WTC11 (cell line): ENCODE measurements at regions of chr9 and their contacts with region 1.

Region 1: DNA sequence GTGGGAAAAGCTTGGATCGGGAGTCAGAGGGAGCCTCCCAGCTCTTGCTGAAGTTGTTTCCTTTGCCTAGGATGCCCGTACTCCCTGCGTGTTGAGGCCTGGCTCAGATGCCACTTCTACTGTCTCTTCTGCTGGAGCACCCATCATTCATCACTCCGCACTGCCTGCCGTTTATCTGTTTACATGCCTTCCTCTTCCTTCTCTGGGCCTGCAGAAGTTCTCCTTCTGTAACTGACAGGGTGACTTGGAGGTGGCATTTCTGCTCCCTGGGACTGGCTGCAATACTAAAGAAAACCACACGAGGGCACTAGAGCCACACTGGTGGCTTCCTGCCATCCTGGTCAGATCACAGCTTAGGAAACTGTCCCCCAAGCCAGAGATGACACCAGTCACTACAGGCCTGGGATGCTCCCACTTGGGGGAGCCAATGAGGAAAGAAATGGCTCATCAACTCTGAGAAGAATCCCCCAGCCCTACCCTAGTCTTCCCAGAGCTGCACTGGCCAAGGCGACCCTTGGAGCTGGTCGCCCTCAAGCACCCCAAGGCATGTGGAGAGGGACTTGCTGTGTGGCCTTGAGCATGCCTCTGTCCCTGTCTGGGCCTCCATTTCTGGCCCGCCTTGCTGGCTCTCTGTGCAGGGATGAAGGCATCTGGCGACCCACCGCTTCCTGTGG is 9.7 kb upstream of the SLC25A51 start:
- DNase-seq: peak; percentile 92
- ATAC-seq: peak; percentile 96
- H3K4me3 Mint-ChIP-seq: no peak overlapping the region
- H3K27ac Mint-ChIP-seq: no peak overlapping the region
- H3K4me1 Mint-ChIP-seq: 0 out of 2 replicates have a peak, but pooled peaks cover 3% of the 10 kb centered on the region
- H3K27me3 Mint-ChIP-seq: no peaks in the 10 kb centered on the region
- CTCF ChIP-seq: peak; percentile 97

Region 2: DNA sequence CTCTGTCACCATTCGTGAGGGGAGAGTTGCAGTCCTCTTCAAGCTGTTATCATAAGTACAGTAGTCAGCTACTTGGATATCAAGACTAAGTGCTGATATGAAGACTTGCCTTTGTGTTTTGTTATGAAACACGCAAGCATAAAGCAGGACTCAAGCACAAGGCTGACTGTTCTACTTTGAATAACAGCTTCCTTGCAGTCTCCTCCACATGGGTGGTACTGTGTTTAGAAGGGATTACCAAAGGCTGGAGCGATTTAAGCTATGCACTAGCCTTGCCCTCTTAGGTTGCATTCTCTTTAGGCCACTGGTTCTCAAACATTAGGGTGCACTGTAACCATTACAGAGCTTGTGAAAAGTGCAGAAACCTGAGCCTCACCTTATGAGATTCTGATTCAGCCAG is 51.1 kb before region 1 on chr9:
- CTCF ChIA-PET with region 1: no interaction called
- POLR2A ChIA-PET with region 1: no interaction called
- DNase-seq: no peak
- ATAC-seq: no peak
- H3K4me3 Mint-ChIP-seq: no peak overlapping the region
- H3K27ac Mint-ChIP-seq: no peak overlapping the region
- H3K4me1 Mint-ChIP-seq: no peaks in the 10 kb centered on the region
- H3K27me3 Mint-ChIP-seq: no peaks in the 10 kb centered on the region
- CTCF ChIP-seq: no peak

Region 3: DNA sequence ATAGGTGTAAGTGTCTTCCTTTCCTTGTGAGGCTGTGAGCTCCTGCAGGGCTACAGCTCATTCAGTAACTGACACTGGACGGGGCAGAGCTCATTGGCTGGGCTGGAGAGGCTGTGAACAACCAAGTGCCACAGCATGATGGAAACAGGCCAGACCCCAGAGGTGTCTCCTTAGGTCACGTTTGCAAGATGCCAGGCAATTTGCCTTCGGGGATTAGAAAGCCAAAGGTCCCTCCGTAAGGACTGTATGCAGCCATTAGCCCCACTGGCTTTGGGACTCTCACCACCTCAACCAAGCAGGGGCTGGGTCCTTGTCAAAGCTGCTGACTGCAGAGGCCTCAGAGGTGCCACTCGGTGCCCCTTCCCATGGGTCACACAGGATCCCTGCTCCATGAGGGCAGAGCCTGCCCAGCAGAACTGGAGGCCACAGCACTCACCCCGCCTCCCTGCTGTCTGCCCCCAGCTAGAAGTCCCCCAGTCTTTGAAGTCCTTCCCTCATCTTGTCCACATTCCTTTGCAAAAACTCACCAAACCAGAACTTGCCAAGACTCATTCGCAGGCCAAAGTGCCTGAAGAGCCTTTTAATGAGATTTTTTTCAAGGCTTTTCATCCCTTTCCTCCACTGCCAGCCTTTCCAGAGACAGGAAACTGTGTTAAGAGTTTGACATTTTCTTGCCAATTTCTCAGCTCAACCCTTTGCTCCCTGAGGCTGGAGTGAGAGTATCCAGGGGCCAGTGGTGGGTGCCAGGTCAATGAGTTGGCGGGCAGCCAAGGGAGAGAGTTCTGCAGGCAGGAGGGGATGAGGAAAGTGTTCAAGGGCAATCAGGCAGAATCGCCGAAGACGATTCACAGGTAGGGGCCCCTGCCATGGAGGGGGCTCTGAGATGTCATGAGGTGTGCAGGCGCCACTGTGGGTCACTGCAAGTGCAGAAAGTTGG is 30.0 kb after region 1 on chr9:
- CTCF ChIA-PET with region 1: interaction called, 14 read pairs
- POLR2A ChIA-PET with region 1: no interaction called
- DNase-seq: no peak
- ATAC-seq: no peak; the same call in 1 of the 2 replicates
- H3K4me3 Mint-ChIP-seq: no peak overlapping the region
- H3K27ac Mint-ChIP-seq: peak overlapping the region; percentile 66
- H3K4me1 Mint-ChIP-seq: peaks cover 26% of the 10 kb centered on the region
- H3K27me3 Mint-ChIP-seq: no peaks in the 10 kb centered on the region
- CTCF ChIP-seq: no peak

Region 4: DNA sequence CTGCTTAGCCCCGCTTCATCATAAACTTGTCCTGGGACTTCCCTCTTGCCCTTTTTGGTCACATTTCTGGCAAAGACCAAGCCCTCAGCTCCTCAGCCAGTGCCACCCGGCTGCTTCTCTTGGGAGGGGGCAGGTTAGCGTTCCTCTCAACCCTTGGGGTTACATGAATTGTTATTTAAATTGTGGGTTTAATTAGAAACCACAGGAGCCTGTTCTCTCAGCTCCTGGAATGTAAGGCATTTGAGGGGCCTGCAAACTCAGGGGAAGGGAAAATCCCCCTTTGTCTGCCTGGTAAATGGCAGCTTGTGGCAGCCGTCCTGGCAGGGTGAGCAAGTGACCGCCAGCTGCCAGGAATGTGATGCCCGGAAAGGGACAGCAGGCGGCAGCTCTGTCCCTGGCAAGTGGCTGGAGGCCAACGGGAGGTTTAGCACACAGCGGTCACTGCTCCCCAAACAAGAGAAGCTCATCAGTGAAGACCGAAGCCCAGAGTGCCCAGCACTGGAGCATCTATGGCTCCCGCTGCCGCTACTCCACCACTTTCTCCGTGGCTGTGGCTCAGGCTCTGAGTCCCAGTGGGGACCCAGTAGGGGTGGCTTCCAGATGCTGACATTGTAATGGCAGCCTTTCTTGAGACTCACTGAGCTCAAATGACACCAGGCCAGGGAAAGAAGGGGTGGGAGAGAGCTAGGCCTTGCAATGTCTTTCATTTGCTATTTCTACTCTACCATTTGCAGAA is 103.7 kb after region 1 on chr9:
- CTCF ChIA-PET with region 1: interaction called, 33 read pairs
- POLR2A ChIA-PET with region 1: no interaction called
- DNase-seq: peak; percentile 85
- ATAC-seq: peak; percentile 88
- H3K4me3 Mint-ChIP-seq: peak overlapping the region; percentile 49
- H3K27ac Mint-ChIP-seq: peak overlapping the region; percentile 97
- H3K4me1 Mint-ChIP-seq: peaks cover 93% of the 10 kb centered on the region
- H3K27me3 Mint-ChIP-seq: no peaks in the 10 kb centered on the region; the same call in 1 of the 2 replicates
- CTCF ChIP-seq: no peak; the same call in 1 of the 2 replicates

Region 5: DNA sequence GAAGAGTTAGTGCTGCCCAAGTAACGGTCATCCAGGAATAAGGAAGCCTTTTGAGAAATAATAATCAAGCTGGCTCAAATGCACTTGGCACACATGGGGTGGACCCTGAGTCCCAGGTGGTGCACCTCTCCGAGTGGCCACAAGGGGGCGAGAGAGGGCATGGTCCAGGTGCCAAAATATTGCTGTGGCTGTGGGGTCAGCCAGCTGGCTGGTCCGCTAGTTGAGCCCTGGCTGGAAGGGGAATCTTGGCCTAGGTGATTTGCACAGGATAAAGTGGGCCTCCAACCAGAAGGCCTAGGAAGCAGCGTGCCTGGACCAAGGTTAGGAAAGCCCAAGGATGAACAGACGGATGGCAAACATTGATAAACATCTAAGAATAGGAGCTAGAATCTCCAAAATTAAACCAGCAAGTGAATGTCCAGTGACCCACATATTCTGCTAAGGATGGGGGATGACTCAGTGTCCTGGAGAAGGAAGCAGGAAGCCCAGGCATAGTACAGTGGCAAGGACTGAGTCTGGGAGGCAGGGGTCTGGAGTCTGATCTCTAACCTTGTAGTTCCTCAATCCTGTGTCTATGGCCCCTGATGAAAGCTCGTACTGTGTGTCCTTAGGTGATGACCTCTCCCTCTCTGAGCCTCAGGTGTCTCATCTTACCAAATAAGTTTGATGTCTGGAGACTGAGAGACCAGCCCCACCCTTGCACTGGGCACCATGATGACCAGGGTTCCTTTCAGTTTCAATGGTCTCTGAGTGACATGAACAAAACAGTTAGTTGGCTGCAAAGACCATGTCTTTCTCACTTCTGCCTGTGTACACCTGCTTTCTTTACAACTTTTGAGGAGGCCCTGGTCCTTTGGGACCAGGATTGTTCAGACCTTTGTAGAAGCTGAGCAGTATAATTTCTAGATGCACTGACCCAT is 174.6 kb after region 1 on chr9:
- CTCF ChIA-PET with region 1: interaction called, 32 read pairs
- POLR2A ChIA-PET with region 1: interaction called, 3 read pairs
- DNase-seq: peak; percentile 90
- ATAC-seq: peak; percentile 88
- H3K4me3 Mint-ChIP-seq: no peak overlapping the region
- H3K27ac Mint-ChIP-seq: no peak overlapping the region
- H3K4me1 Mint-ChIP-seq: peaks cover 25% of the 10 kb centered on the region
- H3K27me3 Mint-ChIP-seq: no peaks in the 10 kb centered on the region; the same call in 1 of the 2 replicates
- CTCF ChIP-seq: peak; percentile 98

Region 6: DNA sequence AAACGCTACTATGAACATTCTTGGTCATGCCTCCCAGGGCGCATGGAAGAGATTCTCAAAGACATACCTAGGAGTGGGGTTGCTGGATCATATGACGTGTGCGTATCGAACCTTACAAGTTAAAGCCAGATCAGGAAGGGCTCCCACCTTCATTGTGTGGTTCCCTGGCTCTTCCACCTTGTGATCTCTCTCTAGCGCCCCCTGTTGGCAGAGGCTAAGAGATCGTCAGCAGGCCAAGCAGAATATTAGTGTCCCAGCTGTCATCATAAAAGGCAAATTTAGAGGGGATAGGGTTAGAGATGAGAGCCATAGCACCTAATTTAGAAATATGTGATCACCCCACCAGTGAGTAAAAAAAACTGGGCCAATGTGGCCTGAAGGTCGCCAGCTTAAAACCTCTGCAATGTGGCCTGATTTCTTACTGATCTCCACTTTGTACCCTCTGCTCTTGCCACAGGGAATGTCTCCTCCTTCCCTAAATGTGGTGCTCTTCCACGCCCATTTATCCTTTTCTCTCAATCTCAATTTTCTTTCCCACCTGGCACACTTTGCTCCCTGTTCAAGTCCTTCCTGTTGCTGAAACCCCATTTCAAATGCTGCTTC is 247.1 kb after region 1 on chr9:
- CTCF ChIA-PET with region 1: interaction called, 30 read pairs
- POLR2A ChIA-PET with region 1: no interaction called
- DNase-seq: peak; percentile 86
- ATAC-seq: peak; percentile 87
- H3K4me3 Mint-ChIP-seq: no peak overlapping the region
- H3K27ac Mint-ChIP-seq: no peak overlapping the region; the same call in 1 of the 2 replicates
- H3K4me1 Mint-ChIP-seq: no peaks in the 10 kb centered on the region
- H3K27me3 Mint-ChIP-seq: peaks cover 7% of the 10 kb centered on the region
- CTCF ChIP-seq: peak; percentile 91

Region 7: DNA sequence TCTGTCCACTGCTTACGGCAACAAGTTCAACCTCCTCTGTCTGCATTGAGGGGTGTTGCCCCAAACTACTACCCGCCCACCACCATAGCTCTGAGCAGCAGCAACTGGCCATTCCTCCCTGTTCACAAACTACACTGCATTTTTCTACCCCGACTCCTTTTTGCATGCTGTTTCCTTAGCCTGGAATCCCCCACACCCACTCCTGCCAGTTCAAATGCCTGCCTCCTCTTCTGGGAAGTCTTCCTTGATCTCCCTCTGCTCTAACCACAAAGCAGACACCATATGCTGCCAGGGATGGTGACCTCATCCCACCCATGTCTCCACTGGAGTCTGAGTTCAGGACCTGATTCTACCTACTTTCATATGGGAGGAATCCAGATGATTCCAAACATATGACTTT is 492.2 kb after region 1 on chr9:
- CTCF ChIA-PET with region 1: interaction called, 10 read pairs
- POLR2A ChIA-PET with region 1: no interaction called
- DNase-seq: no peak
- ATAC-seq: no peak
- H3K4me3 Mint-ChIP-seq: no peak overlapping the region
- H3K27ac Mint-ChIP-seq: no peak overlapping the region
- H3K4me1 Mint-ChIP-seq: peaks cover 6% of the 10 kb centered on the region
- H3K27me3 Mint-ChIP-seq: no peaks in the 10 kb centered on the region
- CTCF ChIP-seq: no peak